B cell (primary cell): ENCODE measurements at regions of chr14 and their contacts with region 1.

Region 1: GRCh38 chr14:100375963-100376735 is 53.0 kb downstream of the SLC25A47 start:
- DNase-seq: peak; percentile 95
- ATAC-seq: peak; percentile 89
- H3K4me3 ChIP-seq: peak within 1 kb of the TSS; percentile 70 to 93 (median 84)
- H3K4me3 Mint-ChIP-seq: peak within 1 kb of the TSS; percentile 95
- H3K27ac ChIP-seq: peak within 1 kb of the TSS; percentile 62 to 93
- H3K27ac Mint-ChIP-seq: peak within 1 kb of the TSS; percentile 93
- H3K4me1 ChIP-seq: peaks cover 32 to 46% of the 10 kb centered on the region in 2 donors
- H3K4me1 Mint-ChIP-seq: peaks cover 40% of the 10 kb centered on the region
- H3K27me3 ChIP-seq: no peaks in the 10 kb centered on the region
- H3K27me3 Mint-ChIP-seq: no peaks in the 10 kb centered on the region
- CTCF ChIP-seq: no peak

Region 2: DNA sequence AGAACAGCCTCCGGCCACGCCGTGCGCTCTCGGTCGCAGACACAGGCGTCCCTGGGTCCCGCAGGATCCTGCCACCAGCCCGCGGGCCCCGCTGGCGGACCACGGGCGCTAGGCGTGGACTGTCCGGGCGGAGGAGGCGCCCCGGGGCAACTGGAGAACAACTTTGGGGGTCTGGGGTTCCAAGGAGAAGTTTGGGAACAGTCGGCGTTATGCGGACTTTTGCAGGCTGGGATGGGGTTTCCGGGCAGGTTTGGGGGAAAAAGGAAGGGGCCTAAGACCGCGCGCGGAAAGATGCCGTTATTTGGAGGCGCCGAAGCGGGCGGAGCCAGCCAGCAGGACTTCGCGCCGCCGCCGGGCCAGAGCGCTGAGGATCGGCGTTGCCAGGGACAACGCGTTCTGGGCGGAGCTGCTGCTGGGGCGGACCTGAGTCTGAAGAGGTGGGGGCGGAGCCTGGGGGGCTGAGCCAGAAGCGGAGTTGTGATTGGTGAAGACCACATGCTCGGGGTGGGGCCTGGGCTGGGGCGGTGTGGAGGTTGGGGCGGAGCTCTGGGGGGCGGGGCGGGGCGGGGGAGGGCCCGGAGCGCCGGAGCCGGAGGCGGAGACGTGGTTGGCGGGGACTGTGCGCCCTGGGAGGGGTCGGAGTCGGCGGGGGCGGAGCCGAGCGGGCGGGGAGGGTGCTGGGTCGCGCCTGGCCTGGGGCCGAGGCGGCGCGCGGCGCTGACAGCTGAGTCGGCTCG is 692.4 kb before region 1 on chr14 and contains the start of gene CYP46A1:
- CTCF ChIA-PET with region 1: no interaction called
- POLR2A ChIA-PET with region 1: no interaction called
- intact Hi-C with region 1: loop called (anchors 5 kb)
- DNase-seq: peak; percentile 99
- ATAC-seq: peak; percentile 95
- H3K4me3 ChIP-seq: peak within 1 kb of the TSS; percentile 41 to 99 (median 84)
- H3K4me3 Mint-ChIP-seq: peak within 1 kb of the TSS; percentile 95
- H3K27ac ChIP-seq: peak within 1 kb of the TSS; percentile 41 to 87
- H3K27ac Mint-ChIP-seq: peak within 1 kb of the TSS; percentile 93
- H3K4me1 ChIP-seq: peaks cover 17 to 24% of the 10 kb centered on the region in 2 donors
- H3K4me1 Mint-ChIP-seq: peaks cover 13% of the 10 kb centered on the region
- H3K27me3 ChIP-seq: peaks cover 0 to 38% (median 8%) of the 10 kb centered on the region in 4 experiments
- H3K27me3 Mint-ChIP-seq: peaks cover 34% of the 10 kb centered on the region
- CTCF ChIP-seq: no peak
- total RNA-seq, gene CYP46A1: 0.10 and 0.27 TPM in 2 replicates

Region 3: GRCh38 chr14:100056964-100057795 is 319.0 kb before region 1 on chr14:
- CTCF ChIA-PET with region 1: no interaction called
- POLR2A ChIA-PET with region 1: no interaction called
- intact Hi-C with region 1: loop called (anchors 5 kb)
- DNase-seq: peak; percentile 66
- ATAC-seq: peak; percentile 77
- H3K4me3 ChIP-seq: no peak overlapping the region
- H3K4me3 Mint-ChIP-seq: no peak overlapping the region
- H3K27ac ChIP-seq: no peak overlapping the region
- H3K27ac Mint-ChIP-seq: peak overlapping the region; percentile 57
- H3K4me1 ChIP-seq: peaks cover 16% of the 10 kb centered on the region in 2 donors
- H3K4me1 Mint-ChIP-seq: peaks cover 31% of the 10 kb centered on the region
- H3K27me3 ChIP-seq: no peaks in the 10 kb centered on the region
- H3K27me3 Mint-ChIP-seq: no peaks in the 10 kb centered on the region
- CTCF ChIP-seq: peak; percentile 69

Region 4: GRCh38 chr14:100239840-100240724 is 136.1 kb before region 1 on chr14:
- CTCF ChIA-PET with region 1: interaction called, 10 read pairs
- POLR2A ChIA-PET with region 1: interaction called, 4 read pairs
- intact Hi-C with region 1: loop called (anchors 1 kb)
- DNase-seq: peak; percentile 93
- ATAC-seq: peak; percentile 52
- H3K4me3 ChIP-seq: peak overlapping the region; percentile 72 to 91 (median 87)
- H3K4me3 Mint-ChIP-seq: peak overlapping the region; percentile 87
- H3K27ac ChIP-seq: peak overlapping the region; percentile 55 to 97
- H3K27ac Mint-ChIP-seq: peak overlapping the region; percentile 95
- H3K4me1 ChIP-seq: peaks cover 38 to 47% of the 10 kb centered on the region in 2 donors
- H3K4me1 Mint-ChIP-seq: peaks cover 55% of the 10 kb centered on the region
- H3K27me3 ChIP-seq: no peaks in the 10 kb centered on the region
- H3K27me3 Mint-ChIP-seq: no peaks in the 10 kb centered on the region
- CTCF ChIP-seq: peak; percentile 67

Region 5: DNA sequence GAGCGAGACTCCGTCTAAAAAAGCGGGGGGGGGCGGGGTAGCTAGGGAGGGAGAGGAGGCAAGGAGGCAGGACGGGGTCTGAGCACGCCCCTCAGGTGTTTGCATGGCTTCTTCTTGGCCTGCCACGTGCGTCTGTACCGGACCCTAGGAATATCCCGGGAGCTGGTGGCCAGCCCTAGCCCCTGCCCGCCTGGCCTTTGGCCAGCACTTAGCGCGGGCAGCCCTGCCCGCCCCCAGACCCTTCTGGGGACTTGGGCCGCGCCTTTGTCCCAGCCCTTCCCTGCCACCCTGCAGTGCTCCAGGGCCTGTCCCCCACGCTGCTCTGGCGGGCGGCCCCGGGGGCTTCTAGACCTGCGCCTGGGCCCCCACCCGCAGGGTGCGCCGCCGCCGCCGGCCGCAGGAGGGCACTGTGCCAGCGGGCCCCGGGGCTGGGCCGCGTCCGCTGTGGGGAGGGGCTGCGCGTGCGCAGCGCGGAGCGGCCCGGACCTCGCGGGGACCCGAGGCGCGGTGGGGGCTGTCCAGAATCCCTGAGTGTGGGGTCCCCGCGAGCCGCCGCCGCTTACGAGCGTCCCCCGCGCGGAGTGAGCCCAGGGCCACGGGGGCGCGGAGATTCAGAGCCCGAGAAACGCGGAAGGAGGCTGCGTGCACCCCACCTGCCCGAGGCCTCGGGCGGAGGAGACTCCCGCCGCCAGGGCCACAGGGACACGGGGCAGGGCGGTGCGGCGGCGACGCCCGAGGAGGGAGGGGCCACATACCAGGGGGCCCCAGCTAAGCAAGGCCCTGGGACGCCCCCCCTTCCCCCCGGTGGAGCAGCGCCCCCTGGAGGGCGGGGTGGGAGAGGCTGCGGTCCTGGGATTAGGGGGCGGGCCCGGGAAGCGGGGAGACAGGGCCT is 90.9 kb before region 1 on chr14:
- CTCF ChIA-PET with region 1: interaction called, 52 read pairs
- POLR2A ChIA-PET with region 1: no interaction called
- intact Hi-C with region 1: loop called (anchors 1 kb)
- DNase-seq: peak; percentile 89
- ATAC-seq: peak; percentile 91
- H3K4me3 ChIP-seq: peak overlapping the region in 4 of 5 experiments; percentile 74 to 89 (median 82)
- H3K4me3 Mint-ChIP-seq: peak overlapping the region; percentile 84
- H3K27ac ChIP-seq: peak overlapping the region; percentile 80 to 90
- H3K27ac Mint-ChIP-seq: peak overlapping the region; percentile 79
- H3K4me1 ChIP-seq: peaks cover 12% of the 10 kb centered on the region in 2 donors
- H3K4me1 Mint-ChIP-seq: peaks cover 13% of the 10 kb centered on the region
- H3K27me3 ChIP-seq: no peaks in the 10 kb centered on the region
- H3K27me3 Mint-ChIP-seq: no peaks in the 10 kb centered on the region
- CTCF ChIP-seq: peak; percentile 99

Region 6: GRCh38 chr14:100306420-100307219 is 69.5 kb before region 1 on chr14 and contains the start of gene SLC25A29:
- CTCF ChIA-PET with region 1: interaction called, 11 read pairs
- POLR2A ChIA-PET with region 1: no interaction called
- intact Hi-C with region 1: loop called (anchors 1 kb)
- DNase-seq: peak; percentile 84
- ATAC-seq: peak; percentile 94
- H3K4me3 ChIP-seq: peak within 1 kb of the TSS in 4 of 5 experiments; percentile 70 to 81 (median 80)
- H3K4me3 Mint-ChIP-seq: peak within 1 kb of the TSS; percentile 94
- H3K27ac ChIP-seq: peak within 1 kb of the TSS in 1 of 2 donors; percentile 46
- H3K27ac Mint-ChIP-seq: peak within 1 kb of the TSS; percentile 83
- H3K4me1 ChIP-seq: peaks cover 20 to 32% of the 10 kb centered on the region in 2 donors
- H3K4me1 Mint-ChIP-seq: peaks cover 21% of the 10 kb centered on the region
- H3K27me3 ChIP-seq: peaks cover 0 to 3% (median 0%) of the 10 kb centered on the region in 4 experiments
- H3K27me3 Mint-ChIP-seq: no peaks in the 10 kb centered on the region
- CTCF ChIP-seq: no peak
- total RNA-seq, gene SLC25A29: 99.9 and 108 TPM in 2 replicates

Region 7: GRCh38 chr14:100341301-100342031 is 34.7 kb before region 1 on chr14:
- CTCF ChIA-PET with region 1: interaction called, 10 read pairs
- POLR2A ChIA-PET with region 1: no interaction called
- intact Hi-C with region 1: loop called (anchors 5 kb)
- DNase-seq: peak; percentile 69
- ATAC-seq: peak; percentile 95
- H3K4me3 ChIP-seq: peak overlapping the region in 1 of 5 experiments; percentile 19
- H3K4me3 Mint-ChIP-seq: peak overlapping the region; percentile 62
- H3K27ac ChIP-seq: peak overlapping the region; percentile 75 to 78
- H3K27ac Mint-ChIP-seq: peak overlapping the region; percentile 93
- H3K4me1 ChIP-seq: peaks cover 15 to 22% of the 10 kb centered on the region in 2 donors
- H3K4me1 Mint-ChIP-seq: peaks cover 24% of the 10 kb centered on the region
- H3K27me3 ChIP-seq: no peaks in the 10 kb centered on the region
- H3K27me3 Mint-ChIP-seq: no peaks in the 10 kb centered on the region
- CTCF ChIP-seq: no peak